GM12878 (cell line): ENCODE measurements at regions of chr1 and their contacts with region 1.

Region 1: DNA sequence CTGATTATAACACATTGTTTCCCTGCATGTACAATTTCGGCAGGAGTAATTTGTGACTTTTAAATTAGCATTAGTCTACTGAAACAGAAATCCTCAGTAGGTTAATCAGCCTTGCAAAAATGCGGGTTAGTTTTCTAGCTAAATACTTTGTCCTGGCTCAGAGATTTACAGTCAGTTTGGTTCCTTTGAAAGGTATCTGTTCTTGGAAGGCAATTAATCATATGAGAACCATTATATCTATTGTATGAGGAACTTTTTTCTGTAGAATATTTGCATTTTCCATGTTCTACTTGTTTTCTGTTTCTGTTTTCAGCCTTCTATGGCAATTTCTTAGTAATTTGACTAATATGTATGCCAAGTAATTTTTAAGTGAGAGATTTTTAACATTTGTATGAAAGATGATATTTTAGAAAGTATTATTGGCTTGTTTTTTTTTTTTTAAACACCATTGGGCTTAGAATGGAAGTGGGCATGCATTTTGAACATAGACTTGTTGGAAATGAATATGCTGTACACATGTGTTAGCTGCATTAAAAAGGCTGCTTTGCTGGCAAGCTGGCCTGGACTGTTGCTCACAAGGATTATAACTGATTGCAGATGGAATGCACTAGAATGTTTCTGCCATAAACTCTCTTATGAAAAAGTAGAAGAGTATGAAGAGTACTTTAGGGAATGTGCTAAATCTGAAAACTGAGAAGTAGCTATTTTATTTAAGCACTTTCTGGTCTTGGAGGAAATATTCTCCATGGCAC is 26.2 kb downstream of the KIF1B start:
- DNase-seq: no peak
- ATAC-seq: peak; percentile 77
- H3K4me3 ChIP-seq: no peak overlapping the region
- H3K27ac ChIP-seq: peak overlapping the region; percentile 32; the same call in 1 of the 2 replicates
- H3K4me1 ChIP-seq: peaks cover 16% of the 10 kb centered on the region
- H3K27me3 ChIP-seq: no peaks in the 10 kb centered on the region
- CTCF ChIP-seq: no peak
- EP300 ChIP-seq: no peak
- POLR2A ChIP-seq: no peak
- RAD21 ChIP-seq: no peak

Region 2: GRCh38 chr1:10217748-10218441 is 18.7 kb before region 1 on chr1:
- CTCF ChIA-PET with region 1: interaction called, 11 read pairs
- POLR2A ChIA-PET with region 1: interaction called, 3 read pairs
- RAD21 ChIA-PET with region 1: interaction called, 8 read pairs
- SMC1A ChIA-PET with region 1: interaction called, 9 read pairs
- in situ Hi-C with region 1: no loop called
- intact Hi-C with region 1: no loop called
- DNase-seq: no peak
- ATAC-seq: peak; percentile 50
- H3K4me3 ChIP-seq: no peak overlapping the region
- H3K27ac ChIP-seq: no peak overlapping the region
- H3K4me1 ChIP-seq: peaks cover 10% of the 10 kb centered on the region; the same call in 1 of the 2 replicates
- H3K27me3 ChIP-seq: no peaks in the 10 kb centered on the region
- CTCF ChIP-seq: no peak
- EP300 ChIP-seq: no peak
- POLR2A ChIP-seq: no peak
- RAD21 ChIP-seq: no peak

Region 3: DNA sequence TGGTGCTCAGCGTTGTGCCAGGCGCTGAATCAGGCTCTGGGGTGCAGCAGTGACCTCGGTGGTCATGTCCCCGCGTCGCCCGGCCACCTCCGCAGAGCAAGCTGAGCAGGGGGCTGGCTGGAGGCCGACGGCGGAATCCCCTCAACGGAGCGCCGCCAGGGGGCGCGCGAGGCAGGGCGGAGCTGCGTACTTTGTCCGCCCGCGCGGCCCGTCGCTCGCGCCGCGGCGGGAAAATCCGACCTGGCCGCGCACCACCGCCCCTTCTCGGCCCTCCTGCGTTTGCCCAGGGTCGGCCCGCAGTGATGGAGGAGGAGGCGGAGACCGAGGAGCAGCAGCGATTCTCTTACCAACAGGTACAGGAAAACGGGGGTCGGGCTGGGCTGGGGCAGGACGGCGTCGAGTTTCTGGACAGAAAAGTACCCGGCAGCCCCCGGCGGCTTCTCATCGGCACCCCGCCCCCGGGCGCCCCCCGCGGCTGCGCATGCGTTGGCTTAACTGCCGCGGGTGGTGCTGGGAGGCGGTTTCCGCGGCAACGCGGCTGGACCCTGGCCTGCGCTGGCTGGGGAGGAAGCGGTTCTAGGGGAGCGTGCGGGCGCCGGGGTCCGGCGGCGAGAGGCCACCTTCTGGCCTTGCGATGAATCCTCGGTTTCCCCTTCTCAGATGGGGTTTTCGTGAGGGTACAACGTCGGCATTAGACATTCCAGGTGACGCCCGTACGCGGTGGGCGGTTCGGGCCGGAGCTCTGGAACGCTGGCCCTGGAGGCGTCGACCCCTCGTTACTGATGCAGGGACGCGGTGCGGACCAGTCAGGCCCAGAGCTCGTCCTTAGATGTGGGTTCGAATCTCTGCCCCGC is 193.9 kb after region 1 on chr1 and contains the start of gene CENPS:
- CTCF ChIA-PET with region 1: no interaction called
- POLR2A ChIA-PET with region 1: no interaction called
- RAD21 ChIA-PET with region 1: no interaction called
- SMC1A ChIA-PET with region 1: no interaction called
- in situ Hi-C with region 1: no loop called
- intact Hi-C with region 1: no loop called
- DNase-seq: peak; percentile 51
- ATAC-seq: peak; percentile 89
- H3K4me3 ChIP-seq: peak within 1 kb of the TSS; percentile 93
- H3K27ac ChIP-seq: peak within 1 kb of the TSS; percentile 80
- H3K4me1 ChIP-seq: peaks cover 24% of the 10 kb centered on the region
- H3K27me3 ChIP-seq: no peaks in the 10 kb centered on the region
- CTCF ChIP-seq: peak; percentile 87 to 98 (median 93); a peak in 5 of 6 replicates
- EP300 ChIP-seq: no peak
- POLR2A ChIP-seq: peak; percentile 74
- RAD21 ChIP-seq: peak; percentile 51
- polyA plus RNA-seq, gene CENPS: 10.9 to 17.5 TPM